Upper lobe of right lung (tissue), 1 donor: ENCODE measurements at regions of chr16 and their contacts with region 1.

Region 1: DNA sequence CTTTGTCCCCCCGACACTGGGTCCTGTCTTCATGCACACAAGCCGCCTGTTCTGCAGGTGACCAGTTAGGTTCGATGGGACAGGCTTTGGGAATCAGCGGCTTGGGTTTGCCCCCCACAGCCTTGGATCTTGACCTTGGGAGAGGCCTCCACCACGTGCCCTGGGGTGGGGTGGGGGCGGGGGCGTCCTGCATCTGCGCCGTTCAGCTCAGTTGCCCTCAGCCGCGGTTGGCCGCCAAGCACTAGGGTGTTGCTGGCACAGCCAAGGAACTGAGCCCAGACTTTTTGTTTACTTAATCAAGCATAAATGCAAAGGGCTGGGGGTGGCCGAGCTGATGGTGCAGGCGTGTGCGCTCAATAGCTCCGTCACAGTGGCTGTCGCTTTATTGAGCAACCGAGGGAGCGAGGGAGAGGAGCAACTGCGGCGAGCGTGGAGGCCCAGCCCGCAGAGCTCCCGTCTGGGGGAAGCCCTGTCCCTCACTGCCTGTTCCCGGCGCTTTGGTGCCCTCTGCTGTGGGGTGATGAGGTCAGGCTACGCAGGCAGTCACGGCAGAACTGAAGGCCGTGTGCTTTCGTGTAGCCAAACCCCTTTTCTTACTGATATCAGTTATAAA is 33.9 kb downstream of the JPH3 start:
- DNase-seq: peak; percentile 93
- ATAC-seq: peak; percentile 95
- H3K4me3 ChIP-seq: peak overlapping the region; percentile 35
- H3K27ac ChIP-seq: no peak overlapping the region
- H3K4me1 ChIP-seq: peaks cover 14% of the 10 kb centered on the region
- H3K27me3 ChIP-seq: no peaks in the 10 kb centered on the region
- CTCF ChIP-seq: peak; percentile 72

Region 2: GRCh38 chr16:87416826-87417527 is 219.2 kb before region 1 on chr16:
- intact Hi-C with region 1: loop called (anchors 10 kb)
- DNase-seq: no peak
- ATAC-seq: no peak
- H3K4me3 ChIP-seq: no peak overlapping the region
- H3K27ac ChIP-seq: no peak overlapping the region
- H3K4me1 ChIP-seq: no peaks in the 10 kb centered on the region
- H3K27me3 ChIP-seq: no peaks in the 10 kb centered on the region
- CTCF ChIP-seq: peak; percentile 67